CD8-positive, alpha-beta T cell (primary cell): ENCODE measurements at regions of chr3 and their contacts with region 1.

Region 1: DNA sequence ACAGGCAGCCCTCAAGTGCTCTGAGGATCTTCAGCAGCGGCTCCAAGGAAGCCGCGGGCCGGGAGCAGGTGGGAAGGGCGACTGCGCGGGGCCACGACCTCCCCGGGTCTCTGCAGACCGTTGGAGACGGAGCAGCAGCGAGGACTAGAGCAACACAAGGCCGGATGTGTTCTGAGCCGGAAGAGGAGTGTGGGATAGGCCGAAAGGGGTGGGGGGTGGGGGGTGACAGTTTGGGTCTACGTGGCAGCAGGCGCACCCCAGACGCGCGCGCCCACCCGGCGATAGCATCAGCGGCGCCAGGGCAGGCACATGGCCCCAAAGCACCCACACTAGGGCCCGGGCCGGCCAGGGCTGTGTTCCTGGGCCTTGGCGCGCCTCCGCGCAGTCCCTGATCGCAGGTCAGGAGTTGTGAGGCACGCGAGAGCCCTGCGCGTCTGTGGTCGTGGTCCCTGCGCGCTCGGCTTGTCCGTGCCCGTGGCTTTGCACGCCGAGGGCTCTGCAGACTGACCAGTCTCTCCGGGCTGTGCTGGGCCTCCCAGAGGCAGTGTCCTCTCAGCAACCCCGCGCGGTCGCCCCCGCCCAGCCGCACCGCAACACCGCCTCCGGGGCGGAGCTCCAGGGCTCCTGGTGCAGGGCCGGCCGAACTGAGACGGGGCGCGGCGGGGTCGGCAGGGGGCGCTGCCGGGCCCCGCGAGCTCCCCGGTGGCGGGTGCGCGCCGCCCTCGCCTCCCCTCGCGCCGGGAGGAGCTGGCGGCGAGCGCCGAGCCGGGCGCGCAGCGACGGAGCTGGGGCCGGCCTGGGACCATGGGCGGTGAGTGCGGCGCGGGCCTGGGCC is at the start of gene PXYLP1:
- DNase-seq: peak; percentile 78 to 95 (median 89)
- ATAC-seq: peak; percentile 90
- H3K4me3 ChIP-seq: peak within 1 kb of the TSS; percentile 89 to 94
- H3K4me3 Mint-ChIP-seq: peak within 1 kb of the TSS; percentile 91
- H3K27ac ChIP-seq: peak within 1 kb of the TSS; percentile 87 to 94
- H3K27ac Mint-ChIP-seq: peak within 1 kb of the TSS; percentile 98
- H3K4me1 ChIP-seq: peaks cover 42% of the 10 kb centered on the region
- H3K4me1 Mint-ChIP-seq: peaks cover 51% of the 10 kb centered on the region
- H3K27me3 ChIP-seq: no peaks in the 10 kb centered on the region
- H3K27me3 Mint-ChIP-seq: no peaks in the 10 kb centered on the region
- CTCF ChIP-seq: peak; percentile 66
- total RNA-seq, gene PXYLP1: 14.5 to 21.8 TPM

Region 2: DNA sequence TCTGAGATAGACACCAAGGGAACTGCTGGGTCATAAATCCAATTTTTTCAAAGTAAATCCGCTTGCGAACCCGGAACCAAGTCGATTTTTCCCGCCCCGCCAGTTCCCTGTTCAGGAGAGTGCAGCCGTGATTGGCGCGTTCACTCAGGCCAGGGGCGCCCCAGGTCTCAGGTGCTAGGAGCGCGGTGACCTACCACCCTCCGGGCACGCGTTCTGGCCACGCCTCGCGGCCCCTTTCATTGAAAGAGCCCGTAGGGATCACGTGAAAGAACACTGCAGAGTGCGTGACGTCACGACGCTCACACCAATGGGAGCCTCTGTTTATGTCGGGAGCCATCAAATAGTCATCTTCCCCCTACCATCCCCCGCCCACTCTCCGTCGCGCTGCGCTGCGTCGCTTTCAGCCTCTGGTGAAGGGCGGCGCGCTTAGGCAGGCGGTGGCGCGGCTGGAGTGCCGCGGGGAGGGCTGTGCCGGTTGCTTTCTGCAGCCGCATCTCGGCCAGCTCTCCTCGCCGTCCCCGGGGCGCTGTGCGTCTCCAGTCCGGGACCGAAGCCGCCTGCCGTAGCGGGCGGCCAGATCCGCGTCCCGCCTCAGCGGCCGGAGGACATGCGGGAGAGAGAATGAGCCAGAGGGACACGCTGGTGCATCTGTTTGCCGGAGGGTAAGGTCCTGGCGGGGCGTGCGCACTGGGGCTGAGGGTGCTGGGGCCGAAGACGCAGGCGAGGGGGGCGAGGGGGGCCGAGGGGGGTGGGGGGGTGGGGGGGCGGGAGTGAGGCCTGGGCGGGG is 289.7 kb before region 1 on chr3 and contains the start of gene SLC25A36:
- CTCF ChIA-PET with region 1: no interaction called
- POLR2A ChIA-PET with region 1: no interaction called
- intact Hi-C with region 1: loop called in 1 of 2 experiments (anchors 2 kb)
- DNase-seq: peak; percentile 90 to 100 (median 96)
- ATAC-seq: peak; percentile 96
- H3K4me3 ChIP-seq: peak within 1 kb of the TSS; percentile 71 to 78
- H3K4me3 Mint-ChIP-seq: peak within 1 kb of the TSS; percentile 90
- H3K27ac ChIP-seq: peak within 1 kb of the TSS; percentile 85 to 88
- H3K27ac Mint-ChIP-seq: peak within 1 kb of the TSS; percentile 99
- H3K4me1 ChIP-seq: peaks cover 14% of the 10 kb centered on the region
- H3K4me1 Mint-ChIP-seq: peaks cover 36% of the 10 kb centered on the region
- H3K27me3 ChIP-seq: no peaks in the 10 kb centered on the region
- H3K27me3 Mint-ChIP-seq: no peaks in the 10 kb centered on the region
- CTCF ChIP-seq: no peak
- total RNA-seq, gene SLC25A36: 156 to 165 TPM

Region 3: DNA sequence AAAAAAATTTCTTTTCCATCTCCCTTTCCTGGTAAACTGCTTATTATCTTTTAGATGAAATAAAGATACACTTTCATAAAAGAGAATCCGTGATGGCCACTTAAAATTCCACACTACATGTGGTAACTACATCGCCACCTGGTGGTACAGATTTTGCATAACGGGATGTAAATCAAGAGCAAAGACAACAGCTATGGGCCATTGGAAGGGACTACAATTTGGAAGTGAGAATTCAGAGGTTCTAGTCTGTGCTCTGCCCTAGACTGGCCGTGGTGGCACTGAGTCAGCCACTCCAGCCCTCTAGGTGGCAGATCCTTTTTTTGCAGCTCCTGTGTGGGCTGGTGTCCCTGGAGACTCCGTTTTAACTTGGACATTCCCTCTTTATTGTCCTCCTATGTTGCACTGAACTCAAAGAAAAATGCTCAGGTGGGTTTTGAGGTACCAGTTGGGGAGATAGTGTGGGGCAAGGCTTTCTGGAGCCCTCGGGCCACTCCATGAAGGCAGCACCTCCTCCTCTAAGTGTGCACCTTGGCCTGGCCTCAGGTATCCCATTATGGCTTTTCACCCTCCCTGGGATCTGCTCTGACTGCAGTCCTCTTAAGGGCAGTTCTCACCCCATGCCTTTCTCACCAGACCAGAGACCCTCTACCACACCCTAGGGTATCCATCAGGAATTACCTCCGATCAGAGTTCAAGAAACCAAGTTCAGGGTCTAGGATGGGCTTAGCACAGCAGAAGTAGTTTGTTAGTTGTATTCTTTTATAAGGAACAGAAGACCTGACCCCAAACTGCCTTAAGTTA is 125.3 kb before region 1 on chr3:
- CTCF ChIA-PET with region 1: no interaction called
- POLR2A ChIA-PET with region 1: no interaction called
- intact Hi-C with region 1: no loop called
- DNase-seq: peak; percentile 21 to 81 (median 63)
- ATAC-seq: peak; percentile 49
- H3K4me3 ChIP-seq: no peak overlapping the region
- H3K4me3 Mint-ChIP-seq: no peak overlapping the region
- H3K27ac ChIP-seq: no peak overlapping the region
- H3K27ac Mint-ChIP-seq: no peak overlapping the region
- H3K4me1 ChIP-seq: no peaks in the 10 kb centered on the region
- H3K4me1 Mint-ChIP-seq: no peaks in the 10 kb centered on the region
- H3K27me3 ChIP-seq: no peaks in the 10 kb centered on the region
- H3K27me3 Mint-ChIP-seq: no peaks in the 10 kb centered on the region
- CTCF ChIP-seq: peak; percentile 70

Region 4: GRCh38 chr3:141255846-141256261 is 24.5 kb after region 1 on chr3:
- CTCF ChIA-PET with region 1: interaction called, 144 read pairs
- POLR2A ChIA-PET with region 1: interaction called, 34 read pairs
- intact Hi-C with region 1: loop called (anchors 1 kb)
- DNase-seq: peak in 6 of 9 experiments; percentile 29 to 79 (median 58)
- ATAC-seq: peak; percentile 98
- H3K4me3 ChIP-seq: no peak overlapping the region
- H3K4me3 Mint-ChIP-seq: no peak overlapping the region
- H3K27ac ChIP-seq: no peak overlapping the region
- H3K27ac Mint-ChIP-seq: peak overlapping the region; percentile 80
- H3K4me1 ChIP-seq: peaks cover 13% of the 10 kb centered on the region
- H3K4me1 Mint-ChIP-seq: peaks cover 35% of the 10 kb centered on the region
- H3K27me3 ChIP-seq: no peaks in the 10 kb centered on the region
- H3K27me3 Mint-ChIP-seq: no peaks in the 10 kb centered on the region
- CTCF ChIP-seq: peak; percentile 55

Region 5: GRCh38 chr3:141279077-141279967 is 48.0 kb after region 1 on chr3:
- CTCF ChIA-PET with region 1: interaction called, 81 read pairs
- POLR2A ChIA-PET with region 1: interaction called, 37 read pairs
- intact Hi-C with region 1: loop called (anchors 1 kb)
- DNase-seq: peak in 3 of 9 experiments; percentile 30 to 65 (median 46)
- ATAC-seq: peak; percentile 89
- H3K4me3 ChIP-seq: no peak overlapping the region
- H3K4me3 Mint-ChIP-seq: no peak overlapping the region
- H3K27ac ChIP-seq: no peak overlapping the region
- H3K27ac Mint-ChIP-seq: peak overlapping the region; percentile 32
- H3K4me1 ChIP-seq: peaks cover 18% of the 10 kb centered on the region
- H3K4me1 Mint-ChIP-seq: peaks cover 23% of the 10 kb centered on the region
- H3K27me3 ChIP-seq: no peaks in the 10 kb centered on the region
- H3K27me3 Mint-ChIP-seq: no peaks in the 10 kb centered on the region
- CTCF ChIP-seq: peak; percentile 59

Region 6: GRCh38 chr3:141402476-141403171 is 171.3 kb after region 1 on chr3:
- CTCF ChIA-PET with region 1: interaction called, 4 read pairs
- POLR2A ChIA-PET with region 1: interaction called, 4 read pairs
- intact Hi-C with region 1: loop called in 1 of 2 experiments (anchors 10 kb)
- DNase-seq: peak; percentile 15 to 80 (median 56)
- ATAC-seq: peak; percentile 67
- H3K4me3 ChIP-seq: peak overlapping the region; percentile 70 to 85
- H3K4me3 Mint-ChIP-seq: peak overlapping the region; percentile 96
- H3K27ac ChIP-seq: peak overlapping the region; percentile 81 to 88
- H3K27ac Mint-ChIP-seq: peak overlapping the region; percentile 97
- H3K4me1 ChIP-seq: peaks cover 25% of the 10 kb centered on the region
- H3K4me1 Mint-ChIP-seq: peaks cover 70% of the 10 kb centered on the region
- H3K27me3 ChIP-seq: no peaks in the 10 kb centered on the region
- H3K27me3 Mint-ChIP-seq: no peaks in the 10 kb centered on the region
- CTCF ChIP-seq: no peak

Region 7: DNA sequence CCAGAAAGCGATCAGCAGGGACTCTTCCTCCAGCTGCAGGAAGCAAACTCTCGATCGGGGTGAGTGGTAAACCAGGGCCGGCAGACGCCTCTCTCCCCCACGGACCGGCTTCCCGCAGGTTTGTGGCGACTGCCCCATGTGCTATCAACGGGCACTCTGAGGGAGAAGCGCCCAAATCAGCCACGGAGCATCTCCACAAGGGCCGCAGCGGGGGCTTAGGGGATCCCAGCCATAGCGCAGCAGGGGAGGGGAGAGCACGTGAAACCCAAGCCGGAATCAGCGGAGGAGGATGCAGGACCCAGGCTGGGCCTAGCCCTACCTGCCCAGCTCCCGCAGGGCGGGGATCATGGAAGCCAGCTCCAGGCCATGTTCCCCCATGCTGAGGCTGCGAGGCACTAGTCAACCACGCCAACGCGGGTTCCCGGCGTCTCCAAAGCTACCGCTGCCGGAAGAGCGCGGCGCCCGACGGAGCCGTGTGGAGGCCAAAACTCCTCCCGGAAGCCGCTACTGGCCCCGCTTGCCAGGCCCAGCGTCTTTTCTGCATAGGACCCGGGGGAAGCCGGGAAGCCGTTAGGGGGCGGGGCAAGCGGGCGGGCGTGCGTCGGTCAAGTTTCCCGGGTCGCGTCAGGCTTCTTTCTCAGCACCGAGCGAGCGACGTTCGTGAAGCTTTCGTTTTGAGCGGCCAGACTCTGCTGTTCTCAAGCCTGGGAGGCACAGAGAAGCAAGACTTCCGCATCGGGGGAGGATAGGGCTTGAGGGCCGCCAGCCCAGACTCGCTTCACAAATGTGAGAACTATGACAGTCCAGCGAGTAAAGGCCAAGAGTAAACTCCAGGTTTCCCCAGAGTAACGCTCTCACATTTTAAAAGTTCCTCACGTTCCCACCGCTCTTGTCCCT is 1347.3 kb after region 1 on chr3 and contains the start of gene ATR:
- CTCF ChIA-PET with region 1: no interaction called
- POLR2A ChIA-PET with region 1: no interaction called
- intact Hi-C with region 1: loop called in 1 of 2 experiments (anchors 10 kb)
- DNase-seq: peak; percentile 91 to 98 (median 97)
- ATAC-seq: peak; percentile 91
- H3K4me3 ChIP-seq: peak within 1 kb of the TSS; percentile 92 to 99
- H3K4me3 Mint-ChIP-seq: peak within 1 kb of the TSS; percentile 96
- H3K27ac ChIP-seq: peak within 1 kb of the TSS; percentile 97 to 99
- H3K27ac Mint-ChIP-seq: peak within 1 kb of the TSS; percentile 98
- H3K4me1 ChIP-seq: peaks cover 45% of the 10 kb centered on the region
- H3K4me1 Mint-ChIP-seq: peaks cover 52% of the 10 kb centered on the region
- H3K27me3 ChIP-seq: no peaks in the 10 kb centered on the region
- H3K27me3 Mint-ChIP-seq: no peaks in the 10 kb centered on the region
- CTCF ChIP-seq: no peak
- total RNA-seq, gene ATR: 26.7 to 28.0 TPM

Region 8: GRCh38 chr3:142787719-142788118 is 1556.4 kb after region 1 on chr3:
- CTCF ChIA-PET with region 1: no interaction called
- POLR2A ChIA-PET with region 1: no interaction called
- intact Hi-C with region 1: no loop called
- DNase-seq: no peak
- ATAC-seq: no peak
- H3K4me3 ChIP-seq: no peak overlapping the region
- H3K4me3 Mint-ChIP-seq: no peak overlapping the region
- H3K27ac ChIP-seq: no peak overlapping the region
- H3K27ac Mint-ChIP-seq: no peak overlapping the region
- H3K4me1 ChIP-seq: no peaks in the 10 kb centered on the region
- H3K4me1 Mint-ChIP-seq: no peaks in the 10 kb centered on the region
- H3K27me3 ChIP-seq: no peaks in the 10 kb centered on the region
- H3K27me3 Mint-ChIP-seq: no peaks in the 10 kb centered on the region
- CTCF ChIP-seq: no peak